Activated CD8-positive, alpha-beta T cell treated with anti-CD3 and anti-CD28 coated beads, Interleukin-2, amount 10 ng/mL, durations not matched to agents 7 days and 5 days (primary cell): ENCODE measurements at regions of chr11 and their contacts with region 1.

Region 1: GRCh38 chr11:72591785-72592490 is 82.3 kb downstream of the PDE2A start:
- DNase-seq: peak; percentile 74
- ATAC-seq: peak; percentile 88
- H3K4me3 Mint-ChIP-seq: no peak overlapping the region
- H3K27ac Mint-ChIP-seq: peak overlapping the region; percentile 48
- H3K4me1 Mint-ChIP-seq: peaks cover 37% of the 10 kb centered on the region
- H3K27me3 Mint-ChIP-seq: peaks cover 44% of the 10 kb centered on the region

Region 2: GRCh38 chr11:72642884-72643511 is 51.1 kb after region 1 on chr11:
- CTCF ChIA-PET with region 1: interaction called, 37 read pairs
- POLR2A ChIA-PET with region 1: no interaction called
- DNase-seq: peak; percentile 69
- ATAC-seq: peak; percentile 85
- H3K4me3 Mint-ChIP-seq: no peak overlapping the region
- H3K27ac Mint-ChIP-seq: no peak overlapping the region
- H3K4me1 Mint-ChIP-seq: peaks cover 2% of the 10 kb centered on the region
- H3K27me3 Mint-ChIP-seq: peaks cover 9% of the 10 kb centered on the region